ENCODE measurements at regions of chr2 and their contacts with region 1.

Region 1: GRCh38 chr2:113390124-113390849 is 47.2 kb upstream of the ZNG1B start:
- DNase-seq: peak; percentile 69
- CTCF ChIP-seq: peak; percentile 96

Region 2: GRCh38 chr2:112764071-112765044 is 625.9 kb before region 1 on chr2 and contains the start of gene CKAP2L:
- CTCF ChIA-PET with region 1: no interaction called
- POLR2A ChIA-PET with region 1: no interaction called
- DNase-seq: peak; percentile 97
- CTCF ChIP-seq: no peak

Region 3: GRCh38 chr2:113203901-113204519 is 186.3 kb before region 1 on chr2:
- CTCF ChIA-PET with region 1: interaction called, 60 read pairs
- POLR2A ChIA-PET with region 1: no interaction called
- DNase-seq: peak; percentile 83
- CTCF ChIP-seq: peak; percentile 85

Region 4: DNA sequence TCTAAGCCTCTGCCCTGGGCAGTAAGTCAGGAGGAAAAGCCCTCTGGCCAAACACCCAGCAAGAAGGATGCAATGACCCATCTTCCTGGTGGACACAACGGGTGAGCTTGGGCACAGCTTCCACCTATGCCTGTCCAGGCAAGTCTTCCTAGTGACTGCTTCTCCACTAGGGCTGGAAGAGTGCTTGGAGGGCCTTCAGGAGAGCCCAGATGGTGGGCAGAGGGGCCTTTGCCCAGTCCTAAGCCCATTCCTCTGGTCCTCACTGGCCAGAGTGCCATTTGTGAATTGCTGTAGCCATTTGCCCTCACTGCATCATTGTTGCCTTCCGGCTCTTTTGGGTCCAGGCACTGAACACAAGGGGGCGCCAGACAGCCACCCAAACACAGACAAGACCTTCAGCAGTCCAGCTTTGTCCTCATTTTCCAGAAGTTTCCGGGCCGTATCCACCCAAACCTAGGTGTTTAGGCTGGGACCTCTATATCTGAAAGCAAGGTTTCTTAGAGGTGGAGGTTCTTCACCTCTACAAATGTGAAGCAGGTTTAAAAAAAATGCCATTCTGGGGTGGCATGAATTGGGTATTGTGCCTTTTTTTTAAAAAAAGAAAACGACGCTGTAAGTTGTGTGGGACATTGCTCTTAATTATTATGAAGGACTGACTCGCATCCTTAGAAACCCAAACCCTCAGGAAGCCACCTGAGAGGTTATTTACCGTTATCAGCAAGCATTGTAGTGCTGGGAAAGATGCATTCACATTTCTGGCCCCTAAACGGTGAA is 141.1 kb before region 1 on chr2:
- CTCF ChIA-PET with region 1: interaction called, 100 read pairs
- POLR2A ChIA-PET with region 1: no interaction called
- DNase-seq: peak; percentile 85
- CTCF ChIP-seq: peak; percentile 88

Region 5: DNA sequence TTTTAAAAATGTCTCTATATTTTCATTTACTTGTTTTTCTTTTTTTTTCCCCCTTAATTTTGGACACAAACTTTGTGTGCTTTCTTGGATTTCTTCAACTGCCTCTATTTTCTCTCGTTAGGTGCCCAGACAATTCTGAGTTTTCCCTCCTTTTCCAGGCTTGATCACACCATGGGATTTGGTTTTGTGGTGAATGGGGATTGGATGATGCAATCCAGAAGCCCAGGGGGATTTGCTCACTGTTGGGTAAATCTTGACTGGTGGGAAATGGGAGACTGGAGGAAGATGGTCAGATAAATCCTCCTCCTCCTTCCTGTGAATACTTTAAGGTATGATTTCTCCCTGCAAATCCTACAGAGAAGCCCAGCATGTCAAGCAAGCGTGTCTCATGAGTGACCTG is 92.1 kb before region 1 on chr2:
- CTCF ChIA-PET with region 1: interaction called, 22 read pairs
- POLR2A ChIA-PET with region 1: no interaction called
- DNase-seq: no peak
- CTCF ChIP-seq: no peak

Region 6: DNA sequence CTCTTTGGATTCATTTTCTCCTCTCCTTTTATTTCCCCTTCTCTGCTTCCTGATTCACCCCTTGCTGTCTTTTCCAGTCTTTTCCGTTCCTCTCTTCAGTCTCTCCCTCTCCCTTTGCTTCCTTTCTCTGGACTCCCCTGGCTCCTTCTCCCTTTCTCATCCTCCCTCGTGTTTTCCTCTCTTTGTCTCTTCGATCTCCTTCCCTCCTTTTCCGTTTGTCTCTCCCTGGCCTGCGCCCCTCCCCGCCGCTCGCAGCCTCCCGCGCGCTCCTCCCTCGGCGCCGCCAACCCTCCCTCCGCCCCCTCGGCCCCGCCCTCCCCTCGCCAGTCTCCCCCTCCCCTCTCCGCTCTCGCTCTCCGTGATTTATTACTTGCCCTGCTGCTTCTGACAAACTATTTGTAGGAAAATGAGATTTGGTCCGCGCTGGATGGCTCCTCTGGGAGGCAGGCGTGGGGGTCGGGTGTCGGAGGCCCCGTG is 65.6 kb before region 1 on chr2:
- CTCF ChIA-PET with region 1: no interaction called
- POLR2A ChIA-PET with region 1: no interaction called
- DNase-seq: peak; percentile 68
- CTCF ChIP-seq: no peak

Region 7: DNA sequence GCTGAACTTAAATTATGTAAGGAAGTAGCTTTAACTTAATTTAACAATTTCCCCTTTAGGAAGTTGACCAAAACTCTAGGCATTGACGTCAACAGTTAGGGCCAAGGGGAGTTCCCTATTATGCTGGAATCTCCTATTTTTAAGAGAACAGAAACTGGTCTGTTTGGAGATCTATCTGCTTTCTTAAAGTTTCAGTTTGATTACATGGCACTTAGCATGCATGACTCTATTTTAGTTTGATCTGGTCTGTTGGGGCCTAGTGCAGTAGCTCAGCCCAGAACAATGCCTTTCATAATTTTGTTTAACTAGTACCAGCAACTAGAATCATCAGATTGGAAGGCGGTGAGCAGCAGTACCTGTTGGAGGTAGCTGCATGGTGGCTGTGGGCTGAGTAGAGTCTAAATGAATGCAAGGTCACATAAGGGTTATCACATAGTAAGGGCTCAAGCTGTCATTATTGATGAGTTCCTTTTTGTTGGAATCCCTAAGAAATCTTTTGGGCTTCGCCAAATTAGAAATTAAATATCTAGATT is 13.3 kb before region 1 on chr2:
- CTCF ChIA-PET with region 1: interaction called, 51 read pairs
- POLR2A ChIA-PET with region 1: no interaction called
- DNase-seq: peak; percentile 22
- CTCF ChIP-seq: no peak

Region 8: GRCh38 chr2:114034742-114035141 is 644.5 kb after region 1 on chr2:
- CTCF ChIA-PET with region 1: no interaction called
- POLR2A ChIA-PET with region 1: no interaction called
- DNase-seq: no peak
- CTCF ChIP-seq: no peak

Measured in GM10248 (cell line).